ENCODE measurements at regions of chr19 and their contacts with region 1.

Region 1: DNA sequence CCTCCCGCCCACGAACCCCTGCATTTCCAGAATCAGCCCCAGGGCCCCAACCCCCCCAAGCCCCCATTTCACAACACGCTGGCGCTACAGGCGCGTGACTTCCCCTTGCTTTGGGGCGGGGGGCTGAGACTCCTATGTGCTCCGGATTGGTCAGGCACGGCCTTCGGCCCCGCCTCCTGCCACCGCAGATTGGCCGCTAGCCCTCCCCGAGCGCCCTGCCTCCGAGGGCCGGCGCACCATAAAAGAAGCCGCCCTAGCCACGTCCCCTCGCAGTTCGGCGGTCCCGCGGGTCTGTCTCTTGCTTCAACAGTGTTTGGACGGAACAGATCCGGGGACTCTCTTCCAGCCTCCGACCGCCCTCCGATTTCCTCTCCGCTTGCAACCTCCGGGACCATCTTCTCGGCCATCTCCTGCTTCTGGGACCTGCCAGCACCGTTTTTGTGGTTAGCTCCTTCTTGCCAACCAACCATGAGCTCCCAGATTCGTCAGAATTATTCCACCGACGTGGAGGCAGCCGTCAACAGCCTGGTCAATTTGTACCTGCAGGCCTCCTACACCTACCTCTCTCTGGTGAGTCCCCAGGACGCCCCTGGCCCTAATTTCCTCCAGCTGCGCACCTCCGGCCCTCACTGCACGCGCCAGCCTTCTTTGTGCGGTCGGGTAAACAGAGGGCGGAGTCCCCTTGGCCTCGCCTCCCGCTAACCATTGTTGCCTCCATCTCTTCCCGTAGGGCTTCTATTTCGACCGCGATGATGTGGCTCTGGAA is at the start of gene FTL:
- DNase-seq: peak; percentile 96
- ATAC-seq: peak; percentile 68
- H3K4me3 Mint-ChIP-seq: peak within 1 kb of the TSS; percentile 98
- H3K27ac Mint-ChIP-seq: peak within 1 kb of the TSS; percentile 100
- H3K4me1 Mint-ChIP-seq: peaks cover 51% of the 10 kb centered on the region
- H3K27me3 Mint-ChIP-seq: no peaks in the 10 kb centered on the region
- CTCF ChIP-seq: no peak
- total RNA-seq, gene FTL: 1,296 to 1,324 TPM

Region 2: DNA sequence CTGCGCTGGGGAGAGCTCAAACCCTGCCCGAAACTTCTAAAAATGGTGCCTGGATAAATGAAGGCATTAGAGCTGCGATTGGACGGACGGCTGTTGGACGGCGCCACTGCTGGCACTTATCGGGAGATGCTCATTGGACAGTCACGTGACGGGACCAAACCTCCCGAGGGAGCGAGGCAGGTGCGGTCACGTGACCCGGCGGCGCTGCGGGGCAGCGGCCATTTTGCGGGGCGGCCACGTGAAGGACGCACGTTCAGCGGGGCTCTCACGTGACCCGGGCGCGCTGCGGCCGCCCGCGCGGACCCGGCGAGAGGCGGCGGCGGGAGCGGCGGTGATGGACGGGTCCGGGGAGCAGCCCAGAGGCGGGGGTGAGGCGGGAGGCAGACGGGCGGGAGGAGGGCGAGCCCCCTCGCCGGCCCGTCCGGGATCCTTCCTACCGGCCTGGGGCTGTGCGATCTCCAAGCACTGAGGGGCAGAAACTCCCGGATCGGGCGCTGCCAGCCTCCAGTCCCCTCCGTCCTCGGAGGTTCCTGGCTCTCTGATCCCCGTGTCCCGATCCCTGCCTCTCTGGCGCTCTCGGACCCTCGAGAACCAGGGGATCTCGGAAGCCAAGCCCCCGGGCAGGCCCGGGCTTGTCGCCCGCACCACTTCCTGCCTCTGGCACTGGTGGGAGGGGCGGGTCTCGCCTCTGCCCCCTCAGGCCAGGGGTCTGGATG is 10.5 kb before region 1 on chr19 and contains the start of gene BAX:
- CTCF ChIA-PET with region 1: interaction called, 11 read pairs
- POLR2A ChIA-PET with region 1: interaction called, 38 read pairs
- intact Hi-C with region 1: no loop called
- DNase-seq: peak; percentile 98
- ATAC-seq: peak; percentile 82
- H3K4me3 Mint-ChIP-seq: peak within 1 kb of the TSS; percentile 75
- H3K27ac Mint-ChIP-seq: peak within 1 kb of the TSS; percentile 92
- H3K4me1 Mint-ChIP-seq: peaks cover 31% of the 10 kb centered on the region
- H3K27me3 Mint-ChIP-seq: no peaks in the 10 kb centered on the region
- CTCF ChIP-seq: no peak
- total RNA-seq, gene BAX: 182 to 189 TPM

Region 3: DNA sequence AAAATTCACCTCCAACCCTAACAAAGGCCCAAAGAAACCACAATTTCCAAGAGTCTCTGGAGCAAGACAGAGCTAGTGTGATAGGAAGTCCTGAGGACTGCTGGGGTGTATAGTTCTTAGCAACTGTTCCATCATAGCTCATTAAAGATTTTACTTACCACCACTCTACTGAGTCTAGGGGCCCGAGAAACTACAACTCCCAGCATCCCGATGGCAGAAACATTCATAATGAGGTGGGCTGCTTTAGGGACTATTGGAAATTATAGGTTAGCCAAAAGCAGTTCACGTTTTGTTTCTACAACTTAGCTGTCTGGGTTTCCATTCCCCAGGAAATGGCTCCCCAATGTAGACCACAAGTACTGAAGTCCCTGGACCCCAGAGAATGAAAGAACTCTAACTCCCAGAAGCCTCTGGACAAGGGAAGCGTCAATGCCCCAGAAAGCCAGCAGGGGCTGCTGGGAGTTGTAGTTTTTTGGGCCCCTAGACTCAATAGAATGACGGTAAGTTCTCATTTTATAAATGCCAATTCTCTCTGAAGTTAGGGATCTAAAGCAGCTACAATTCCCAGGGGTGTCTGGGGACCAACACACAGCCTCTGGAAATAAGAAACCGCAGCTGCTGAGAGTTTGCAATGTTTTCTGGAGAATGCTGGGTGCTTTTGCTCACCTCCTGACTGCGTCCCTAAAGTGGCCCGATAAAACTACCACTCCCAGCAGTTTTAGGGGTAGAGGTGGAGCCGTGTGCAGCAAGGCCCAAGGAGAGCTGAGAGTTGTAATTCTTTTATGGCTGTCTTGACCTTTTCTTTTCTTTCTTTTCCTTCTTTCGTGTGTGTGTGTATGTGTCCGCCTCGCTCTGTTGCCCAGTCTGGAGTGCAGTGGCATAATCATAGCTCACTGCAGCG is 11.0 kb after region 1 on chr19:
- CTCF ChIA-PET with region 1: interaction called, 13 read pairs
- POLR2A ChIA-PET with region 1: interaction called, 36 read pairs
- intact Hi-C with region 1: no loop called
- DNase-seq: peak; percentile 78
- ATAC-seq: peak; percentile 62
- H3K4me3 Mint-ChIP-seq: no peak overlapping the region
- H3K27ac Mint-ChIP-seq: peak overlapping the region; percentile 46
- H3K4me1 Mint-ChIP-seq: peaks cover 17% of the 10 kb centered on the region
- H3K27me3 Mint-ChIP-seq: no peaks in the 10 kb centered on the region
- CTCF ChIP-seq: peak; percentile 26

Measured in activated CD8-positive, alpha-beta T cell treated with anti-CD3 and anti-CD28 coated beads for 36 hours (primary cell).